Heart left ventricle (tissue), 16 donors: ENCODE measurements at regions of chrX and their contacts with region 1.

Region 1: GRCh38 chrX:64894454-64895038 is 81.7 kb downstream of the ZC4H2 start:
- DNase-seq: peak in 1 of 5 donors; percentile 32
- ATAC-seq: peak in 2 of 4 donors; percentile 29 to 57
- H3K4me3 ChIP-seq: no peak overlapping the region
- H3K27ac ChIP-seq: no peak overlapping the region
- H3K4me1 ChIP-seq: no peaks in the 10 kb centered on the region
- H3K27me3 ChIP-seq: no peaks in the 10 kb centered on the region
- CTCF ChIP-seq: peak in 9 of 12 donors; percentile 9 to 40 (median 36)
- POLR2A ChIP-seq: no peak

Region 2: GRCh38 chrX:64842492-64842891 is 52.1 kb before region 1 on chrX:
- intact Hi-C with region 1: no loop called
- DNase-seq: no peak
- ATAC-seq: no peak
- H3K4me3 ChIP-seq: no peak overlapping the region
- H3K27ac ChIP-seq: peak overlapping the region in 1 of 12 donors; percentile 24
- H3K4me1 ChIP-seq: no peaks in the 10 kb centered on the region
- H3K27me3 ChIP-seq: no peaks in the 10 kb centered on the region
- CTCF ChIP-seq: no peak
- POLR2A ChIP-seq: no peak

Region 3: GRCh38 chrX:65528705-65529340 is 634.3 kb after region 1 on chrX:
- intact Hi-C with region 1: loop called in 3 of 10 experiments (anchors 5 to 10 kb)
- DNase-seq: peak in 3 of 5 donors; percentile 9 to 42 (median 20)
- ATAC-seq: peak in 3 of 4 donors; percentile 53 to 69 (median 55)
- H3K4me3 ChIP-seq: no peak overlapping the region
- H3K27ac ChIP-seq: no peak overlapping the region
- H3K4me1 ChIP-seq: peaks cover 0 to 17% (median 10%) of the 10 kb centered on the region in 12 donors
- H3K27me3 ChIP-seq: peaks cover 0 to 7% (median 0%) of the 10 kb centered on the region in 9 donors
- CTCF ChIP-seq: peak; percentile 79 to 99 (median 86)
- POLR2A ChIP-seq: no peak